ENCODE measurements at regions of chr17 and their contacts with region 1.

Region 1: GRCh38 chr17:28357061-28357900 is at the start of gene POLDIP2:
- DNase-seq: peak; percentile 95 to 96 (median 96)
- H3K4me3 ChIP-seq: peak within 1 kb of the TSS; percentile 67 to 90
- H3K4me3 Mint-ChIP-seq: peak within 1 kb of the TSS; percentile 92 to 98 (median 95)
- H3K27ac ChIP-seq: peak within 1 kb of the TSS; percentile 85
- H3K27ac Mint-ChIP-seq: peak within 1 kb of the TSS; percentile 93 to 97 (median 96)
- H3K4me1 ChIP-seq: peaks cover 24% of the 10 kb centered on the region
- H3K4me1 Mint-ChIP-seq: peaks cover 18 to 36% (median 26%) of the 10 kb centered on the region in 4 donors
- H3K27me3 ChIP-seq: no peaks in the 10 kb centered on the region
- H3K27me3 Mint-ChIP-seq: no peaks in the 10 kb centered on the region
- total RNA-seq, gene POLDIP2: 27.8 to 28.7 TPM

Region 2: GRCh38 chr17:28041068-28041843 is 316.0 kb before region 1 on chr17:
- CTCF ChIA-PET with region 1: no interaction called
- POLR2A ChIA-PET with region 1: interaction called, 4 read pairs
- intact Hi-C with region 1: loop called (anchors 1 kb)
- DNase-seq: peak; percentile 99
- H3K4me3 ChIP-seq: peak overlapping the region in 1 of 2 donors; percentile 47
- H3K4me3 Mint-ChIP-seq: peak overlapping the region; percentile 77 to 92 (median 88)
- H3K27ac ChIP-seq: peak overlapping the region; percentile 49
- H3K27ac Mint-ChIP-seq: peak overlapping the region; percentile 80 to 95 (median 86)
- H3K4me1 ChIP-seq: peaks cover 42% of the 10 kb centered on the region
- H3K4me1 Mint-ChIP-seq: peaks cover 41 to 59% (median 49%) of the 10 kb centered on the region in 4 donors
- H3K27me3 ChIP-seq: no peaks in the 10 kb centered on the region
- H3K27me3 Mint-ChIP-seq: no peaks in the 10 kb centered on the region

Region 3: DNA sequence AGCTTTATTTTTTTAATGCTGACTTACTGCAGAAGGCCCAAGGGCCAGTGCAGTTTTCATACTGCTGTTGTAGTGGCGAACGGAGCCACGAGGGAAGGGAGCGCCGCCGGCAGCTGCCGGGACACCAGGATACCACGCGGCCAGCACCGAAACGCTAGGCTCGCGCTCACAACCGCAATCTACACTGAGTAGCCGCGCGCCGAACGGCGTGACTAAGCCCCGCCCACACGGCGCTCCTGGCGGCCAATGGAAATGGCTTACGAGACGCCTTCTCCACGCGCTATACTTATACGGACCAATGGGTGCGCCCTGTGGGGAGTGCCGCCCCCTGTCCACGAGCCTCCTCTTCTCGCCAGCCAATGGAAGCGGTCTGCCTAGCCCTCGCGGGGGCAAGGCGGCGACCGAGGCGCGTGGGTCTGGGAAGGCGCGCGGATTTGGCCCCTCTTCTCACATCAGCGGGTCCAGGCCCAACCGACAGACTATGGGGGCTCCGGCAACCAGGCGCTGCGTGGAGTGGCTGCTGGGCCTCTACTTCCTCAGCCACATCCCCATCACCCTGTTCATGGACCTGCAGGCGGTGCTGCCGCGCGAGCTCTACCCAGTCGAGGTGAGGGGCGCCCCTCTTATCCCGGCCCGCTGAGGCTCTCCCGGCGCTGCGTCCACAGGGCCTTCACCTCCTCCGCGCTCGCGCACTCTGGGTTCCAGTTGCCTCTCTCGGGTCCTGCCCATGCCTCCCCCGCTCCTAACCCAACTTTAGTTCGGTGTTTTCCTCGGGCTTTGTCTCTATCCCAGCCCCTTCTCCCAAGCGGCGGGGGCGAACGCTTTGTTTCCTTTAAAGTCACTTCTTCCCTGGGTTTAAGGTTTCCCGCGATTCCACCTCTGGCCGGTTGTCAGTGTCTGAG is 38.3 kb before region 1 on chr17 and contains the start of gene TMEM97:
- CTCF ChIA-PET with region 1: no interaction called
- POLR2A ChIA-PET with region 1: interaction called, 8 read pairs
- intact Hi-C with region 1: loop called (anchors 1 kb)
- DNase-seq: peak; percentile 93 to 96 (median 95)
- H3K4me3 ChIP-seq: peak within 1 kb of the TSS; percentile 58 to 69
- H3K4me3 Mint-ChIP-seq: peak within 1 kb of the TSS; percentile 87 to 95 (median 91)
- H3K27ac ChIP-seq: peak within 1 kb of the TSS; percentile 45
- H3K27ac Mint-ChIP-seq: peak within 1 kb of the TSS; percentile 69 to 90 (median 86)
- H3K4me1 ChIP-seq: peaks cover 19% of the 10 kb centered on the region
- H3K4me1 Mint-ChIP-seq: peaks cover 15 to 32% (median 21%) of the 10 kb centered on the region in 4 donors
- H3K27me3 ChIP-seq: no peaks in the 10 kb centered on the region
- H3K27me3 Mint-ChIP-seq: no peaks in the 10 kb centered on the region
- total RNA-seq, gene TMEM97: 2.4 to 2.6 TPM

Region 4: GRCh38 chr17:28346746-28347246 is 10.5 kb before region 1 on chr17:
- CTCF ChIA-PET with region 1: interaction called, 3 read pairs
- POLR2A ChIA-PET with region 1: interaction called, 21 read pairs
- intact Hi-C with region 1: no loop called
- DNase-seq: no peak
- H3K4me3 ChIP-seq: no peak overlapping the region
- H3K4me3 Mint-ChIP-seq: no peak overlapping the region
- H3K27ac ChIP-seq: no peak overlapping the region
- H3K27ac Mint-ChIP-seq: no peak overlapping the region
- H3K4me1 ChIP-seq: no peaks in the 10 kb centered on the region
- H3K4me1 Mint-ChIP-seq: no peaks in the 10 kb centered on the region
- H3K27me3 ChIP-seq: no peaks in the 10 kb centered on the region
- H3K27me3 Mint-ChIP-seq: no peaks in the 10 kb centered on the region

Region 5: GRCh38 chr17:28371245-28372202 is 14.2 kb after region 1 on chr17 and contains the start of gene SARM1:
- CTCF ChIA-PET with region 1: interaction called, 5 read pairs
- POLR2A ChIA-PET with region 1: interaction called, 62 read pairs
- intact Hi-C with region 1: loop called (anchors 1 kb)
- DNase-seq: peak; percentile 73 to 87 (median 79)
- H3K4me3 ChIP-seq: peak within 1 kb of the TSS in 1 of 2 donors; percentile 81
- H3K4me3 Mint-ChIP-seq: peak within 1 kb of the TSS; percentile 91 to 100 (median 96)
- H3K27ac ChIP-seq: peak within 1 kb of the TSS; percentile 85
- H3K27ac Mint-ChIP-seq: peak within 1 kb of the TSS; percentile 88 to 99 (median 97)
- H3K4me1 ChIP-seq: peaks cover 14% of the 10 kb centered on the region
- H3K4me1 Mint-ChIP-seq: peaks cover 13 to 29% (median 17%) of the 10 kb centered on the region in 4 donors
- H3K27me3 ChIP-seq: no peaks in the 10 kb centered on the region
- H3K27me3 Mint-ChIP-seq: no peaks in the 10 kb centered on the region
- total RNA-seq, gene SARM1: 37.6 to 40.3 TPM

Region 6: GRCh38 chr17:28384281-28385036 is 27.2 kb after region 1 on chr17:
- CTCF ChIA-PET with region 1: no interaction called
- POLR2A ChIA-PET with region 1: interaction called, 58 read pairs
- intact Hi-C with region 1: loop called (anchors 1 kb)
- DNase-seq: peak; percentile 50 to 71 (median 58)
- H3K4me3 ChIP-seq: peak overlapping the region; percentile 86 to 91
- H3K4me3 Mint-ChIP-seq: peak overlapping the region; percentile 92 to 97 (median 95)
- H3K27ac ChIP-seq: peak overlapping the region; percentile 50
- H3K27ac Mint-ChIP-seq: peak overlapping the region; percentile 59 to 94 (median 90)
- H3K4me1 ChIP-seq: peaks cover 22% of the 10 kb centered on the region
- H3K4me1 Mint-ChIP-seq: peaks cover 15 to 32% (median 29%) of the 10 kb centered on the region in 4 donors
- H3K27me3 ChIP-seq: no peaks in the 10 kb centered on the region
- H3K27me3 Mint-ChIP-seq: peaks cover 0 to 2% of the 10 kb centered on the region in 2 donors

Measured in CD4-positive, alpha-beta memory T cell (primary cell).